ENCODE measurements at regions of chr7 and their contacts with region 1.

Region 1: GRCh38 chr7:149067876-149068275 is 22.6 kb downstream of the ZNF786 start:
- DNase-seq: no peak
- ATAC-seq: no peak
- H3K4me3 ChIP-seq: no peak overlapping the region
- H3K27ac ChIP-seq: no peak overlapping the region
- H3K4me1 ChIP-seq: peaks cover 0 to 16% (median 1%) of the 10 kb centered on the region in 12 donors
- H3K27me3 ChIP-seq: no peaks in the 10 kb centered on the region
- CTCF ChIP-seq: no peak
- POLR2A ChIP-seq: no peak

Region 2: GRCh38 chr7:148987010-148987750 is 80.7 kb before region 1 on chr7:
- intact Hi-C with region 1: loop called in 1 of 10 experiments (anchors 5 kb)
- DNase-seq: peak; percentile 77 to 85 (median 81)
- ATAC-seq: peak; percentile 92
- H3K4me3 ChIP-seq: peak overlapping the region; percentile 56 to 84 (median 71)
- H3K27ac ChIP-seq: peak overlapping the region; percentile 53 to 92 (median 77)
- H3K4me1 ChIP-seq: peaks cover 4 to 53% (median 25%) of the 10 kb centered on the region in 12 donors
- H3K27me3 ChIP-seq: no peaks in the 10 kb centered on the region
- CTCF ChIP-seq: no peak
- POLR2A ChIP-seq: peak in 1 of 2 donors; percentile 37

Region 3: DNA sequence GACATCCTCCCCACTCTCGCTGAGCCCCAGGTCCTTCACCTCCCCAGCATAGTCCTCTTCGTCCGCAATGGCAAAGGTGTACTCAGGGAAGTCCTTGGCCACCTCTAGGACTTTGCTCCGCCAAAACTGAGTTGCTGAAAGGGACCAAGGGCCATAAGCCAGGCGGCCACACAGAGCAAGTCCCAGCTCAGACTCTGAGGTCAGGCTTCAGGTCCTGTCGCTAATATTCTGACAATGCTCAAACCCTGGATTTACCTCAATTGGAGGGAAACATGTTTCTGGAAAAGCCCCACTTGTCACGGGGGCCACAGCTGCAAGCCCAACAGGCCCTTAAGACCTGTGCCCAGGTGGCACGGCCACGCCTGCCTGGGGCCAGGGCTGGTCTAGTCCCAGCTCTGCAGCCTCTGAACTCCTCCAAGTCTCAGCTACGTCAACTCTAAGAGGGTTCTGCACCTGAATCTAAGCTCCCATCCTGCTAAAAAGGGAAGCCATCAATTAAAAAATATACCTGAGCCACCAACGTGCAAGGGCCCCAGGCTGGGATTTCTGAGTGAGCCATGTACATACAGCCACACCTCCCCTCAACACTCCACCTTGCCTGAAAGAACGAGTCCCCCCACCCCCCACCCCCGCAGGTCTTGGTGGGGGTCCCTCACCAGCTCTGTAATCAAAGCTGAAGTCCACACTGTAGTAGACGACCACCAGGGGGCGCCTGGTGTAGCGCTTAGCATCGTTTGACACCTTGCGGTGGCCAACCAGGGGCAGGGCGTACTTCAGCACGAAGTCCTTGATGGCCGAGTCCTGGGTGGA is 62.4 kb before region 1 on chr7:
- intact Hi-C with region 1: loop called (anchors 1 to 10 kb)
- DNase-seq: peak; percentile 79 to 90 (median 83)
- ATAC-seq: peak; percentile 63 to 88 (median 82)
- H3K4me3 ChIP-seq: no peak overlapping the region
- H3K27ac ChIP-seq: no peak overlapping the region
- H3K4me1 ChIP-seq: no peaks in the 10 kb centered on the region
- H3K27me3 ChIP-seq: no peaks in the 10 kb centered on the region
- CTCF ChIP-seq: peak; percentile 78 to 90 (median 84)
- POLR2A ChIP-seq: no peak

Region 4: DNA sequence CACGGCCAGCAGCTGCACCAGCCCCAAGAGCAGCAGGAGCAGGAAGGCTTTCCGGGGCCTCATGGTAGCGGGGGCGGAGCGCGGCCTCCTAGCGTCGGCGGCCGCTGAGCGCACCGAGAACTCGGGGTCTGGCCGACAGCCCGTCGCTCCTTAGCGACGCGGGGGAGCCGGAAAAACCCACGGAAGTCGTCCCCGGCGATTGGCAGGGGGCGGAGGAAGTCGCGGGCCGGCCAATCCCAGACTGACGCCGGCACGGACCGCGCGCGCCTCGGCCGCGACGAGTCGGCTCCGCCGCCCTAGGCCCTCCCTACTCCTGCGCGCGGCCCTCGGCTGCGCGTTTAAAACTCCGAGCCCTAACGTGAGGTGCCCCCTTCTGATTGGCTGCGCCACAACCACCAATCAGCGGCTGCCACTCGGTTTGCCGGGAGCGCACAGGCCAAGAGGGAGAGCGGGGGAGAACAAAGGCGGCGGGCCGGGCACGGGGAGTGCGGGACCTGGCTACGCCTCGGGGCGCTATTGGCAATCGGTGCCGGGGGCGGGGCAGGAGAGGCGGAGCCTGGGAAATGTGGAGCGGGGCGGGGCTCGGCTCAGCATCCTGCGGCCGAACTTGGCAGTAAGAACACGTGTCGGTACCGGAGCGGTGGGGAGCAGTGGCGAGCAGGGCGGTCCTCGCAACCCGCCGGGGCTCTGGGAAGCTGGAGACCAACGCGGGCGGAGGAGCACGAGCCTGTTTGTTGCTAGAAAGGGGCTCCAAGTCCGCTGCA is 39.3 kb before region 1 on chr7 and contains the start of gene PDIA4:
- intact Hi-C with region 1: loop called (anchors 1 to 5 kb)
- DNase-seq: peak; percentile 99 to 100 (median 99)
- ATAC-seq: peak; percentile 97 to 99 (median 98)
- H3K4me3 ChIP-seq: peak within 1 kb of the TSS; percentile 63 to 100 (median 78)
- H3K27ac ChIP-seq: peak within 1 kb of the TSS; percentile 45 to 94 (median 87)
- H3K4me1 ChIP-seq: peaks cover 0 to 31% (median 16%) of the 10 kb centered on the region in 12 donors
- H3K27me3 ChIP-seq: no peaks in the 10 kb centered on the region
- CTCF ChIP-seq: peak in 8 of 12 donors; percentile 6 to 53 (median 26)
- POLR2A ChIP-seq: peak in 1 of 2 donors; percentile 89
- total RNA-seq, gene PDIA4: 20.9 to 67.7 (median 33.1) TPM

Region 5: GRCh38 chr7:149090397-149091195 is 22.7 kb after region 1 on chr7 and contains the start of gene ZNF786:
- intact Hi-C with region 1: loop called in 2 of 10 experiments (anchors 1 to 2 kb)
- DNase-seq: peak; percentile 91 to 95 (median 92)
- ATAC-seq: peak; percentile 93 to 98 (median 96)
- H3K4me3 ChIP-seq: peak within 1 kb of the TSS; percentile 68 to 99 (median 88)
- H3K27ac ChIP-seq: peak within 1 kb of the TSS; percentile 94 to 100 (median 98)
- H3K4me1 ChIP-seq: peaks cover 0 to 30% (median 11%) of the 10 kb centered on the region in 12 donors
- H3K27me3 ChIP-seq: no peaks in the 10 kb centered on the region
- CTCF ChIP-seq: peak; percentile 82 to 96 (median 95)
- POLR2A ChIP-seq: peak in 1 of 2 donors; percentile 84
- total RNA-seq, gene ZNF786: 2.2 to 5.3 (median 3.0) TPM